Activated naive CD4-positive, alpha-beta T cell treated with anti-CD3 and anti-CD28 coated beads for 36 hours (primary cell): ENCODE measurements at regions of chr10 and their contacts with region 1.

Region 1: GRCh38 chr10:88974446-88975376 is 15.9 kb upstream of the FAS start:
- DNase-seq: no peak
- H3K4me3 Mint-ChIP-seq: peak overlapping the region; percentile 87
- H3K27ac Mint-ChIP-seq: peak overlapping the region; percentile 87
- H3K4me1 Mint-ChIP-seq: peaks cover 10% of the 10 kb centered on the region
- H3K27me3 Mint-ChIP-seq: no peaks in the 10 kb centered on the region

Region 2: DNA sequence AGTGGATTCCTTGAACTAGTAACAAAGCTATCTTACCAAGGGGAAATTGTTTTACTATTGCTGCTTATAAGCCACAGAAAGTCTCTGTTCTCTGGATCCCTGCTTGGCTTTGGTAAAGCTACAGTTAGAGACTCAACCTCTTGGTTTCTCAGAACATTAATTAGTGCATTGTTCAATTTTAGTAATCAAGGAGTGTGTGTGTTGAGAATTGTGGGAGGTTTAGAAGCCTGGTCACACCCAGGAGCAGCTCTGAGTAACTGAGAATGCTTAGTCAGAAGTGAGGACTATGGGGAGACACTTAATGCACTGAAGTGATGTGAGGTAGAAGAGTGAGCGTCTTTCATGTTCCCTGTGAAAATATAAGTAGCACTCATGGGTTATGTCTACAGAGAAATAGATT is 13.9 kb before region 1 on chr10:
- CTCF ChIA-PET with region 1: no interaction called
- intact Hi-C with region 1: loop called (anchors 1 kb)
- DNase-seq: peak; percentile 32
- H3K4me3 Mint-ChIP-seq: no peak overlapping the region
- H3K27ac Mint-ChIP-seq: no peak overlapping the region
- H3K4me1 Mint-ChIP-seq: peaks cover 24% of the 10 kb centered on the region
- H3K27me3 Mint-ChIP-seq: no peaks in the 10 kb centered on the region

Region 3: DNA sequence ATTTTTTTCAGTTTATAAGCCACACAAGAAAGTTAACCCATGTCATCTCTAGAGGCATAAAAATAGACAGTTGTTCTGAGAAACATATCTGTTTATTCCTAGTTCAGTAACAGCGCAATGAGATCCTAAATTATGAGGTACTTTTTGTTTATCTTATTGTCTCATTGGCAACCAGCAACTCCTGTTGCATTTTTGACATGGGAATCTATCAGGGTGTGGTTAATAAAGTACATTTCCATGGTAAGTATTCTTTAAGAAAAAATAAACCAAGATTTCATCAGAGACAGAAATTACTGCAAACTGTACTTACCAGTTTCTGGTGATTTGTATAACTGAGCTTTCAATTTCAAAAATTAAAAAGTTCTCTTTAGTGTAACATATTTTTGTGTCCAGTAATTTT is 24.9 kb after region 1 on chr10:
- CTCF ChIA-PET with region 1: no interaction called
- intact Hi-C with region 1: no loop called
- DNase-seq: no peak
- H3K4me3 Mint-ChIP-seq: no peak overlapping the region
- H3K27ac Mint-ChIP-seq: no peak overlapping the region
- H3K4me1 Mint-ChIP-seq: peaks cover 66% of the 10 kb centered on the region
- H3K27me3 Mint-ChIP-seq: no peaks in the 10 kb centered on the region